ENCODE measurements at regions of chr12 and their contacts with region 1.

Region 1: DNA sequence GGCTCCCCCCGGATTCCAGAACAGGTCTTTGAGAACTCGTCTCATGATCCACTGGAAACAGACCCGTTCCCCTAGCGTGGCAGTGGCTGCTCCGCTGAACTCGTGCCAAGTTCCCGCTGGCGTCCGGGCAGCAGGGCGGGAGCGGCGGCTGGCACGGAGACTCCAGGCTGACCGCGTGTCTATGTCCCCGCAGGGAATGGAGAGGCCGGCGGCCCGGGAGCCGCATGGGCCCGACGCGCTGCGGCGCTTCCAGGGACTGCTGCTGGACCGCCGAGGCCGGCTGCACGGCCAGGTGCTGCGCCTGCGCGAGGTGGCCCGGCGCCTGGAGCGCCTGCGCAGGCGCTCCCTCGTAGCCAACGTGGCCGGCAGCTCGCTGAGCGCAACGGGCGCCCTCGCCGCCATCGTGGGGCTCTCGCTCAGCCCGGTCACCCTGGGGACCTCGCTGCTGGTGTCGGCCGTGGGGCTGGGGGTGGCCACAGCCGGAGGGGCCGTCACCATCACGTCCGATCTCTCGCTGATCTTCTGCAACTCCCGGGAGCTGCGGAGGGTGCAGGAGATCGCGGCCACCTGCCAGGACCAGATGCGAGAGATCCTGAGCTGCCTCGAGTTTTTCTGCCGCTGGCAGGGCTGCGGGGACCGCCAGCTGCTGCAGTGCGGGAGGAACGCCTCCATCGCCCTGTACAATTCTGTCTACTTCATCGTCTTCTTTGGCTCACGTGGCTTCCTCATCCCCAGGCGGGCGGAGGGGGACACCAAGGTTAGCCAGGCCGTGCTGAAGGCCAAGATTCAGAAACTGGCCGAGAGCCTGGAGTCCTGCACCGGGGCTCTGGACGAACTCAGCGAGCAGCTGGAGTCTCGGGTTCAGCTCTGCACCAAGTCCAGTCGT is 1.5 kb downstream of the APOLD1 start:
- DNase-seq: peak; percentile 80
- H3K4me3 Mint-ChIP-seq: peak overlapping the region; percentile 83
- H3K27ac Mint-ChIP-seq: peak overlapping the region; percentile 80
- H3K4me1 Mint-ChIP-seq: peaks cover 36% of the 10 kb centered on the region
- H3K27me3 Mint-ChIP-seq: no peaks in the 10 kb centered on the region

Region 2: GRCh38 chr12:12803186-12803585 is 16.2 kb after region 1 on chr12:
- CTCF ChIA-PET with region 1: interaction called, 56 read pairs
- POLR2A ChIA-PET with region 1: interaction called, 3 read pairs
- intact Hi-C with region 1: loop called (anchors 1 kb)
- DNase-seq: peak; percentile 61
- H3K4me3 Mint-ChIP-seq: no peak overlapping the region
- H3K27ac Mint-ChIP-seq: peak overlapping the region; percentile 50
- H3K4me1 Mint-ChIP-seq: peaks cover 46% of the 10 kb centered on the region
- H3K27me3 Mint-ChIP-seq: no peaks in the 10 kb centered on the region

Region 3: DNA sequence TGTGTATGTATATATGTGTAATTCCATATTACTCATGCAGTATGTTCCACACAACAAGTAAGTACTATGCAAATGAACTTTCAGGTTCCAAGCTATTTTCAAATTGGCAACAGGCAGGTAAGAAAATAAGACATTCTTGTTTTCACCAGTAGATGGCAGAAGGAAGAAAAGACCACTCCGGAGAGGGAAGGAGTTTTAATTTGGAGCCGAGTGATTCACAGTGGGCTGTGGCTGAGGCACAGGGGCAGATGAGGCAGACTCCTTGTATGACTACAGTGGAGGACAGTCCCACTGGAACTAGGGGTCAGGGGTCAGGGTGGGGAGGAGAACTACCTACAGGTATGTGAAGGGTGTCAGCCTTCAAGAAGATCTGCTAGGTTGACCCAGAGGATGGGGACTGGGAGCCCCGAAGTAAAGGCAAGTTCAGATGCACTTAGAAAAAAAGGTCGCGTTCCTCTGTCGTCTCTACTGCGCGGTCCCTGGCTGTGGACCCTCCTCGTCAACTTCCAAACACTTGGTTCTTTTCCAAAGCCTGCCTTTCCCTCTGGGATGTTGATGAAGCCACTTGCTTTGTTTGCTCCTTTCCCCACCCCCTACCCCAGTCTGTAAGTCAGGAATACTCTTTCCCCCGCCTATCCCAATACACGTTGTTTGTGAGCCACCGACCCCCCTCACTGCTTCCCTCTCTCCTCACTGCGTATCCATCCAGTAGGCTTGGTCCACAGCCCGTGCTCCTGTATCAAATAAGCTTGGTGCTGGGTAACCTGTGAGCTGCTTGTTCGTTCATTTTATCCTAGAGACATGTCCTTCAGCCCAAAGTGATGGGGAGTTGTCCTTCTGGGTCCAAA is 50.3 kb after region 1 on chr12:
- CTCF ChIA-PET with region 1: interaction called, 30 read pairs
- POLR2A ChIA-PET with region 1: no interaction called
- intact Hi-C with region 1: loop called (anchors 1 kb)
- DNase-seq: peak; percentile 79
- H3K4me3 Mint-ChIP-seq: no peak overlapping the region
- H3K27ac Mint-ChIP-seq: peak overlapping the region; percentile 42
- H3K4me1 Mint-ChIP-seq: peaks cover 48% of the 10 kb centered on the region
- H3K27me3 Mint-ChIP-seq: no peaks in the 10 kb centered on the region

Region 4: GRCh38 chr12:12916135-12916944 is 129.4 kb after region 1 on chr12:
- CTCF ChIA-PET with region 1: interaction called, 26 read pairs
- POLR2A ChIA-PET with region 1: no interaction called
- intact Hi-C with region 1: loop called (anchors 1 kb)
- DNase-seq: peak; percentile 91
- H3K4me3 Mint-ChIP-seq: no peak overlapping the region
- H3K27ac Mint-ChIP-seq: no peak overlapping the region
- H3K4me1 Mint-ChIP-seq: peaks cover 9% of the 10 kb centered on the region
- H3K27me3 Mint-ChIP-seq: peaks cover 12% of the 10 kb centered on the region

Region 5: DNA sequence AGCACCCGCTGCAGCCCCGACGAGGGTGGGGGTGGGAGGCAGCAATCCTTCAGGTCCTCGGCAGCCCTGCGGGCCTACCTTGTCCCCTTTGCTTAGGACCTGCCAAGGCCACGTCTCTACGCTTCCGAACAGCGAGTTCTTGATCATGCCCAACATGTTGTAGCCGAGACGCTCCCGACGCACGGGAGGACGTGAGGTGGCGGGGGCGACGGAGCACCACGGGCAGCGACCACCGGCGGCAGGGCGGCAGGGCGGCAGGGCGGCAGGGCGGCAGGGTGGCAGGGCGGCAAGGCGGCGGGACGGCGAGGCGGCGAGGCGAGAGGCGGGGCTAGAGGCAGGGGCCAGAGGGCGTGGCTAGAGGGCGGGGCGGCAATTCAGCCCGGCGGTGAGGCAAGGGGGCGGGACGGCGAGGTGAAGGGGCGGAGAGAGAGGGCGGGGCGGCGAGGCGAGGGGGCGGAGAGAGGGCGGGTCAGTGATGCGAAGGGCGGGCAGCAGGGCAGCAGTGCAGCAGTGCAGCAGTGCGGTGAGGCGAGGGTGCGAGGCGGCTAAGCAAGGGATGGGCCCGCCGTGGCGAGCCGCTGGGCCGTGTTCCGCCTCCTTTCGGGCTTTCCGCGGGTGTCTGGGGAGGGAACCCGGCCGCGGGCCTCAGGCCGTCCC is 213.1 kb after region 1 on chr12 and contains the start of gene HEBP1:
- CTCF ChIA-PET with region 1: no interaction called
- POLR2A ChIA-PET with region 1: no interaction called
- intact Hi-C with region 1: loop called (anchors 2 kb)
- DNase-seq: peak; percentile 97
- H3K4me3 Mint-ChIP-seq: peak within 1 kb of the TSS; percentile 82
- H3K27ac Mint-ChIP-seq: peak within 1 kb of the TSS; percentile 53
- H3K4me1 Mint-ChIP-seq: peaks cover 25% of the 10 kb centered on the region
- H3K27me3 Mint-ChIP-seq: peaks cover 6% of the 10 kb centered on the region
- total RNA-seq, gene HEBP1: 20.5 to 22.4 TPM